H1 (cell line): ENCODE measurements at regions of chr17 and their contacts with region 1.

Region 1: DNA sequence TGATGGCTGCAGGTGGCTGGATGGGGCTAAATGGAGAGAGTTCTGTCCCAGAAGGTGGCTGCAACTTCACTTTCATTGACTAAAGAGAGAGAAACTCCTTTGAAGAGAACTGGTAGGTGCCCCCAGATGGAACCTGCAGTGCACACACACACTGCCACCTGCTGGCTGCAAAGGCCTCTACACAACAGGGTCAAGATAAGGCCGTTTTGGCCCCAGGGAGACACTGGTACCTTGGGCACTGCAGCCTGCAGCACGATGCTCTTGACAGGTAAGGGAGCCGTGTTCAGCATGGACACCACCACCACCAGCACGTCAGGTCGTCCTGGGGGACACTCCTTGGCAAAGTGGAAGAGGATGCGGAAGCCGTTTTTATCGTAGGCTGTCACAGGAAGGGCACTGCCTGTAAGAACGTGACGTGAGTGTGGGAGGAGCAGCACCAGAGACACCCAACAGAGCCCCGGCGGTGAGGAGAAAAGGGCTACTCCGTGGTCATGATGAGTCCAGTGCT is 22.7 kb downstream of the GGA3 start:
- DNase-seq: peak in 1 of 2 experiments; percentile 72
- H3K4me3 ChIP-seq: no peak overlapping the region
- H3K27ac ChIP-seq: no peak overlapping the region
- H3K4me1 ChIP-seq: peaks cover 0 to 4% (median 0%) of the 10 kb centered on the region in 4 experiments; a peak in 3 of 7 replicates
- H3K27me3 ChIP-seq: no peaks in the 10 kb centered on the region
- CTCF ChIP-seq: peak; percentile 83 to 96 (median 94)
- EP300 ChIP-seq: no peak
- POLR2A ChIP-seq: no peak
- RAD21 ChIP-seq: peak; percentile 41 to 59

Region 2: GRCh38 chr17:75131280-75132017 is 107.3 kb before region 1 on chr17 and contains the start of gene NT5C:
- CTCF ChIA-PET with region 1: interaction called, 10 read pairs
- POLR2A ChIA-PET with region 1: interaction called, 6 read pairs
- DNase-seq: peak; percentile 58 to 91
- H3K4me3 ChIP-seq: peak within 1 kb of the TSS; percentile 69 to 95 (median 74)
- H3K27ac ChIP-seq: peak within 1 kb of the TSS; percentile 81
- H3K4me1 ChIP-seq: peaks cover 0 to 5% (median 4%) of the 10 kb centered on the region in 4 experiments; a peak in 5 of 7 replicates
- H3K27me3 ChIP-seq: no peaks in the 10 kb centered on the region
- CTCF ChIP-seq: peak; percentile 65 to 72 (median 68)
- EP300 ChIP-seq: no peak
- POLR2A ChIP-seq: peak; percentile 72 to 75; a peak in 2 of 3 replicates
- RAD21 ChIP-seq: peak; percentile 32 to 42; a peak in 2 of 4 replicates
- total RNA-seq, gene NT5C: 52.1 and 66.9 TPM in 2 replicates

Region 3: GRCh38 chr17:75205037-75205792 is 33.5 kb before region 1 on chr17 and contains the start of gene NUP85:
- CTCF ChIA-PET with region 1: interaction called, 30 read pairs
- POLR2A ChIA-PET with region 1: interaction called, 4 read pairs
- DNase-seq: peak; percentile 73 to 96
- H3K4me3 ChIP-seq: peak within 1 kb of the TSS; percentile 76 to 98 (median 92)
- H3K27ac ChIP-seq: peak within 1 kb of the TSS; percentile 99
- H3K4me1 ChIP-seq: peaks cover 0 to 2% (median 0%) of the 10 kb centered on the region in 4 experiments; a peak in 2 of 7 replicates
- H3K27me3 ChIP-seq: no peaks in the 10 kb centered on the region
- CTCF ChIP-seq: no peak
- EP300 ChIP-seq: no peak
- POLR2A ChIP-seq: peak in 1 of 2 experiments; percentile 79; a peak in 2 of 3 replicates
- RAD21 ChIP-seq: no peak
- total RNA-seq, gene NUP85: 97.4 and 98.5 TPM in 2 replicates

Region 4: GRCh38 chr17:75261336-75262111 is 22.8 kb after region 1 on chr17 and contains the starts of genes GGA3 and MRPS7:
- CTCF ChIA-PET with region 1: interaction called, 369 read pairs
- POLR2A ChIA-PET with region 1: interaction called, 19 read pairs
- DNase-seq: peak in 1 of 2 experiments; percentile 96
- H3K4me3 ChIP-seq: peak within 1 kb of the TSS; percentile 89 to 99 (median 94)
- H3K27ac ChIP-seq: peak within 1 kb of the TSS; percentile 99
- H3K4me1 ChIP-seq: peaks cover 0 to 6% (median 3%) of the 10 kb centered on the region in 4 experiments; a peak in 4 of 7 replicates
- H3K27me3 ChIP-seq: no peaks in the 10 kb centered on the region
- CTCF ChIP-seq: no peak
- EP300 ChIP-seq: no peak
- POLR2A ChIP-seq: peak; percentile 85 to 92
- RAD21 ChIP-seq: no peak
- total RNA-seq, gene GGA3: 54.2 and 60.0 TPM in 2 replicates
- total RNA-seq, gene MRPS7: 75.5 and 79.4 TPM in 2 replicates

Region 5: DNA sequence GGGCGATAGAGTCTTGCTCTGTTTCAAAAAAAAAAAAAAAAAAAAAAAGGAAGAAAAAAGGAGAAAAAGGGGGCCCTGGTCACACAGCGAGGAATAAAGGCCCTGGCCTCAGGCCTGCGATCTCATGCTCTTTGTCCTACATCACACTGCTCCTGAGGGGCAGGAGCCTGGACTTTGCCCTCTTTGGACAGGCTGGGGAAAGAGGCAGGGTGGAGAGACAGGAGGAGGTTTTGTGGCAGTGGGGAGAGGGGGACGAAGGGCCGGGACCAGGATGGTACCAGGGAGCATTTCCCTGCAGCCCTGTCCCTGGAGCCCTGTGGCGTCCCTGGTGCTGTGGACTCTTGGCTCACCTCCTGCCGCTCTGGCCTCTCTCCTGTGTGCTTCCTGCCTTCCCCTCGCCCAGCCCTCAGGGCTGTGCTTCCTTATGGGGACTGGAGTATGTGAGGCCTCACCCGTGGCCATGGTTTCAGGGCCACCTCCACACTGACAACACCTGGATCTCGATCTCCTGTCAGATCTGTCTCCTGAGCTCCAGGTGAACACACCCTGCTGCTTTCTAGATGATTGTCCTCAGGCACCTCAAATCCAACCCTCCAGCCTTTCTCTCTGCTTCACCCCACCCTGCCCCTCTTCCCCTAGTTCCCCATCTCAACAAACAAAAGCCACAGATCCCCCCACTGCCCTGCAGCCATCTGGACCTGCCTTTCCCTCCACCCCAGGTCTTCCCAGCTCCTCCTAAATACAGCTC is 70.5 kb after region 1 on chr17:
- CTCF ChIA-PET with region 1: no interaction called
- POLR2A ChIA-PET with region 1: no interaction called
- DNase-seq: no peak
- H3K4me3 ChIP-seq: no peak overlapping the region
- H3K27ac ChIP-seq: no peak overlapping the region
- H3K4me1 ChIP-seq: peaks cover 0 to 4% (median 2%) of the 10 kb centered on the region in 4 experiments; a peak in 1 of 7 replicates
- H3K27me3 ChIP-seq: no peaks in the 10 kb centered on the region
- CTCF ChIP-seq: no peak
- EP300 ChIP-seq: no peak
- POLR2A ChIP-seq: no peak
- RAD21 ChIP-seq: no peak

Region 6: GRCh38 chr17:75405365-75406221 is 166.9 kb after region 1 on chr17 and contains the start of gene GRB2:
- CTCF ChIA-PET with region 1: interaction called, 11 read pairs
- POLR2A ChIA-PET with region 1: interaction called, 3 read pairs
- DNase-seq: peak; percentile 84 to 100
- H3K4me3 ChIP-seq: peak within 1 kb of the TSS; percentile 90 to 94 (median 92)
- H3K27ac ChIP-seq: no peak within 1 kb of the TSS
- H3K4me1 ChIP-seq: no peaks in the 10 kb centered on the region
- H3K27me3 ChIP-seq: no peaks in the 10 kb centered on the region
- CTCF ChIP-seq: no peak
- EP300 ChIP-seq: no peak
- POLR2A ChIP-seq: peak in 1 of 2 experiments; percentile 73; a peak in 2 of 3 replicates
- RAD21 ChIP-seq: no peak
- total RNA-seq, gene GRB2: 101 and 102 TPM in 2 replicates